ENCODE measurements at regions of chr7 and their contacts with region 1.

Region 1: GRCh38 chr7:6646465-6646864 is 9.3 kb downstream of the ZNF316 start:
- DNase-seq: no peak
- H3K4me3 ChIP-seq: no peak overlapping the region
- CTCF ChIP-seq: no peak
- POLR2A ChIP-seq: no peak

Region 2: DNA sequence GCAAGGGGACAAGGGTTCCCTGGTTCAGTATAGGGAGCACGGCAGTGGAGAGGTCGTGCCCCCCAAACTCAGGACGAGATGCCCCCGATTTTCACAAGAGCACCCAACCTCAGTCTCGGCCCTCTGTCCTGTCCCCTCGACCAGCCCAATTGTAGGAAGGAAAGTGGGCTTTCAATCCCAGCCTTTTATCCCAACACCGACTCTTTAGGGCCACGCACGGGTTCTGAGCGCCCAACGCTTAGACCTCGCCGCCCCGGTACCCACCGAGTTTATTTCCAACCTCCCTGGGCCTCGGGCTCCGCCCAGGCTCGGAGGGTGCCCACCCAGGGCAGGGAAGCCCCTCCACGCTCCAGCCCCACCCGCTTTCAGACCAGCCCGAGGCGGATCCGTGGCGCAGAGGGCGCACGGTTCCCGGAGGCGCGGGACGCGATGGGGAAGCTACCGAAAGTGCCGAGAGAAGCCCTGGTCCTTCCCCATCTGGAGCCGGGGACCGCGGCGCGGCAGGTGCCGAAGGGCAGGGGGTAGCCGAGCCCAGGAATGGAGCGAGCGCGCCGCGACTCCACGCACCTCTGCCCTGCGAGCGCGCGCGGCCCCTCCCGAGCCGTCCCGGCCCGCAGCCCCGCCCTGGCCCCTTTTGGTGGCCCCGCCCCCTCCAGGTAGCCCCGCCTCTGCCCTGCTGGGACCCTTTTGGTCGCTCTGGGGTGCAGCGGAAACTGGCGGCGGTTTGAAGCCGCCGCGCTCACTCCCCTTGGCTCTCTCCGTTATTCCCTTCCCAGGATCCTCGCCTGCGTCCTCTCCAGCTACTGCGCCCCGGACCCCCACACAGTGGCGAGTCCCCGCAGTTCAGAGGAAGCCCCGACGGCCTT is 115.6 kb before region 1 on chr7:
- intact Hi-C with region 1: no loop called
- DNase-seq: no peak
- H3K4me3 ChIP-seq: no peak overlapping the region
- CTCF ChIP-seq: no peak
- POLR2A ChIP-seq: no peak

Region 3: DNA sequence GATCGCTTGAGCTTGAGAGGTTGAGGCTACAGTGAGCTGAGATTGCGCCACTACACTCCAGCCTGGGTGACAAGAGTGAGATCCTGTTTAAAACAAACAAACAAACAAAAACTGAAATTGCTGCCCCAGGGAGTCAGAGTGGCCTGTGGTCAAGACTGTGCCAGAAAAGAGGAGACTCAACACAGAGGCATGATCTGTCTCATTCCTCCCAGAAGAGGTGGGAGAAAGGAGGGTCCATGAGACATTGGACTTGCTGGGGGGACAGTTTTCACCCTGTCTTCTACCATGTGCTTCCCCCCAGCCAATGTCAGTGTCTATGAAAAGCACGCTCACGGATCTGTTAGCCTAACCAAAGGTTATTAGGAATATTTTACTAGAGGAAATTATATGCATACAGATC is 27.8 kb before region 1 on chr7:
- intact Hi-C with region 1: loop called (anchors 1 kb)
- DNase-seq: no peak
- H3K4me3 ChIP-seq: no peak overlapping the region
- CTCF ChIP-seq: no peak
- POLR2A ChIP-seq: no peak

Region 4: GRCh38 chr7:7895754-7896153 is 1249.3 kb after region 1 on chr7:
- intact Hi-C with region 1: no loop called
- DNase-seq: no peak
- H3K4me3 ChIP-seq: no peak overlapping the region
- CTCF ChIP-seq: no peak
- POLR2A ChIP-seq: no peak

Measured in lower leg skin (tissue), 4 donors.